Left ventricle myocardium superior (tissue), 1 donor: ENCODE measurements at regions of chr2 and their contacts with region 1.

Region 1: DNA sequence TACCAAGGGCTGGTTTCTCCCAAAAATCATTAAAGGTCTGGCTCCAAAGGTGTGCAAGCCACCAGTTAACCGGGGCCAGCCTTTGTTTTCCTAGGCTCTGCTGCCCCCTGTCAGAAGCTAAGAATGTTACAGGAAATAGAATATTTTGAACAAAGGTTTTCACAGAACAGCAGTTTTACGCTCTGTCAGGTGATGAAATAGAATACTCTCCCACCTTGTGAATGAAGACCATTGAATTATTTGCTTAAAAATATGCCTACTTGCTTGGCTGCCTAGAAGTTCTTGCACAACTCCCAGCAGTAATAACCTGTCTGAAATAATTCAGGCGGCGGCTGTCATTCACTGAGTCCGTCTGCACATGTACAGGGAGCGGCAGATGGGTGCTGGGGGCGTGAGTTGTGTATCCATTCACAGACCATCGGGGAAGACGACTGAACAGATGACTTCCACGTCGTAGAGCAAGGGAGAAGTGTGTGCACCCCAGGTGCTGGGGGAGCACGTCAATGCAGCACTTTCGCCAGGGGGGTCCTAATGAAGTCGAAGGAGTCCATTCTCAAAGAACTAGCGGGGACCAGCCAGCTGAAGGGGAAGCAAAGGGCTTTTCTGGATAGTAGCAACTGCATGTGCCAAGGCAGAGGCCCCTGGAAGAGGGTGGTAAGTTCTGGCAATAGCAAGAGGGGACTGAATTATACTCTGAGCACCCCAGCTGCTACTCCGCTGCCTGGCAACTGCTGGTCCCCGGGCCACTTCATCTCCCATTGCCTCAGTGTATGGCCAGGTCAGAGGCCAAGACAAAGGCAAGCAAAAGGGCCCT is 56.1 kb downstream of the SF3B1 start:
- DNase-seq: no peak
- ATAC-seq: peak; percentile 68

Region 2: GRCh38 chr2:197102231-197102630 is 276.5 kb before region 1 on chr2:
- intact Hi-C with region 1: no loop called
- DNase-seq: no peak
- ATAC-seq: no peak

Region 3: DNA sequence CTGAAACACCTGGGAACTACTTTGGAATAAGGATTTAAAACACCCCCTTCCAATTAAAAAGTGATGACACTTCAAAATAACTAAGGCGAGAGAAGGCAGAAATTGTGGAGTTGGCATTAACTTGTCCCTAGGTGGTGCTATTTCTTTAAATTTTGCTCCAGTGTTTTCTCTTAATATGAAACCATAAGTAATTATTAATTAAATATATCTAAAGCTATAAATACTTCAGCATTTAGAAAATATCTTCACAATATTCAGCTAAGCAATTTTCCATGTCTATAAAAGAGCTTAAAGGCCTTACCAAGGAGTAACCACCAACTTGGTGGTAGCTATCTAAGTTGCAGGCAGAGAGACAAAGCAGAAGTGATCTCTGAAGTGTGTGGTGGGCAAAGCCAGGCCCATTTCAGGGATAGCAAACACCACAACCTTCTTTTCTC is 265.4 kb before region 1 on chr2:
- intact Hi-C with region 1: loop called (anchors 5 kb)
- DNase-seq: no peak
- ATAC-seq: no peak

Region 4: DNA sequence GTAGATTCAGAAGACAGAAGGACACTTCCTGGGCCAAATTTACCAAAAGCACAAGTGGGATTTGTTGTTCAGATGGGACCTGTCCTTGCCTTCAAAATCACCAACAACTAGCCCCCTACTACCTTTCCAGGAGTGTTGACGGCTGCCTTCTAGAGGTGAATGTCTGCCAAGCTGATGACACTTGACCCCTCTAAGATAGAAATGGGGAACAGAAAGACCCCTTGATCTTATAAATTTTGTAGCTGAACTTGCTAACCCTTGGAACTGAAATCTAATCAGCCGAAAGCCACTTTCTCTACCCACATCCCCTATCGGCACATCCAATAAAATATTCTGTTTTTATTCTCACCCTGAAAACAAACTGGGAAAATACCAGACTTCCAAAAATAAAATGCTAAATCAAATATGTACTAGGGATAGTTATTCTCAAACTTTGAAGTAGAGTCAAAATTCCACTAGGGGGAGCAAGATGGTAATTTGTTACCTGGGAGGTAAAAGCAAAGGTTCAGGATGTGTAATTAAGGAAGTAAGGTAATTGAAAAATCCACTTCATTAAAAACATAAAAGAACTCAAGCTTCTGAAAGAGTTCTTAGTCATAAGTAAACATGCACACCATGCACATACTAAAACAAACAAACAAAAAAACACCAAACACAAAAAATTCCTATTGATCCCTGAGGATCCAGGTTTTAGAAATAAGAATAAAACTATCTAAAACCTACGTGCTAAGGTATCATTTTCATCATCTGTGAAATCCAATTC is 187.3 kb before region 1 on chr2:
- intact Hi-C with region 1: loop called (anchors 10 kb)
- DNase-seq: no peak
- ATAC-seq: peak; percentile 31

Region 5: GRCh38 chr2:197615016-197615652 is 236.4 kb after region 1 on chr2:
- intact Hi-C with region 1: no loop called
- DNase-seq: no peak
- ATAC-seq: no peak